Cardiac septum (tissue), 1 donor: ENCODE measurements at regions of chr17 and their contacts with region 1.

Region 1: GRCh38 chr17:37609170-37610040 is at the start of gene SYNRG:
- DNase-seq: peak; percentile 98
- total RNA-seq, gene SYNRG: 35.7 TPM

Region 2: GRCh38 chr17:37546302-37546701 is 63.1 kb before region 1 on chr17:
- intact Hi-C with region 1: no loop called
- DNase-seq: no peak

Region 3: DNA sequence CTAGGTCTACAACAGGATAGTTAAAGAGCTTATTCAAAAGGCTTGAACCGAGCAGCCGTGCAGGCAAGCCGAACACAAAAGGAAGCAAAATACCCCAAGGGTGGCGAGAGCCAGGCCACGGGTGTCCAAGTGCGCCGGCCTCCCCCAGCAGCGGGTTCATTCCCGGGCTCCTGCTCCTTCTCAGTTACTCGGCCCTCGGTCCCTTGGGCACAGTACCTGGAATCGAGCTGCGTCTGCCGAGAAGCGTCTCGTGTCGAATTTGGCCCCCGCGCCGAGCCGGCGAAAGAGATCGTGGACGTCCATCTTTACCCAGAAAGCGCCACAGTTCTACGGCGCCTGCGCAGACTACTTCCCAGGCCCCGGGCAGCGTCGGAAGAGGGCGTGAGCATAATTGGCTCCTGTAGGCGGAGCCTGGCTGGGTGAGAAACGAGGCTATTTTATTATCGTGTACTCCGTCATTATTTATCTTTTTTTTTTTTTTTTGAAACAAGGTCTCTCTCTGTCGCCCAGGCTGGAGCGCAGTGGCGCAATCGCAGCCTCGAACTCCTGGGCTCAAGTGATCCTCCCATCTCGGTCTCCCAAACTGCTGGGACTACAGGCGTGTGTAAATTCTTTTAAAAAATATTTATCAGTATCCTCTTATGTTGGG is 33.8 kb after region 1 on chr17 and contains the start of gene DDX52:
- intact Hi-C with region 1: loop called (anchors 2 kb)
- DNase-seq: peak; percentile 96
- total RNA-seq, gene DDX52: 12.4 TPM